ENCODE measurements at regions of chr4 and their contacts with region 1.

Region 1: GRCh38 chr4:181998398-181999295 is 244.6 kb upstream of the TENM3 start:
- DNase-seq: no peak

Region 2: DNA sequence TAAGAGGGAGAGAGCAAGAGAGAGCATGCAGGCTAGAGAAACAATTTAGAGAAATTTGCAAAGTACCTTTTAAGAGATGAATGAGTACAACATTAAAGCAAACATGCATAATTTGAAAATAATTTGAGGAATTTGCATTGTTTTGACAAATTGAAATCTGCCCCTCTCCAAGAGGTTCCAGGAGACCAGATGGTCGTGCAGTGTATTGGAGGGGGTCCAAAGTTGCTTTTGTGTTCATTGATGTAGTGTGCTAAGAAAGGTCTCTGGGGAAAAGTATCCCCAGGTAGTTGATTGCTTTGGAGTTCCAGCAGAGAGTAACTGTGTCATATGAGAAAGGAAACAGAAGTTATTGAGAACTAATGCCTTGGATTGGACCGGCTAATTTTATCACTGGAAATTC is 390.5 kb before region 1 on chr4:
- CTCF ChIA-PET with region 1: no interaction called
- POLR2A ChIA-PET with region 1: no interaction called
- DNase-seq: no peak

Region 3: DNA sequence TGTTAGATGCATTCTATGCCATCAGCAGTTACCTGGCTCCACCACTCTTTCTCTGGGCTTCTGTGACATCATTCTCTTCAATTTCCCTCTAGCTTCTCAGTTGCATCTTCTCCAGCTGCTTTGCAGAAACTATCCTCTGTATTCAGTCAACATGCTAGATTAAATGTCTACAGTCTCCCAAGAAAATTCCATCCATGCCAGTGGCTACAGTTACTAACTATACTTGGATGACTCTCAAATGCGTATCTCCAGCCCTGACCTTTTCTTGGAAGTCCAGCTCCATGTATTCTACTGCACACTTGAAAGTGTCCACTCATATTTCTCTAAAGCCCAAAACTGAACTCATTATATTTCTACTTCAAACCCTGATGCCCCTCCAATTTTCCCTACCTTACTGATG is 12.2 kb after region 1 on chr4:
- CTCF ChIA-PET with region 1: interaction called, 16 read pairs
- POLR2A ChIA-PET with region 1: interaction called, 3 read pairs
- DNase-seq: no peak

Measured in HEK293T (cell line).